Transverse colon (tissue), 4 donors: ENCODE measurements at regions of chr7 and their contacts with region 1.

Region 1: DNA sequence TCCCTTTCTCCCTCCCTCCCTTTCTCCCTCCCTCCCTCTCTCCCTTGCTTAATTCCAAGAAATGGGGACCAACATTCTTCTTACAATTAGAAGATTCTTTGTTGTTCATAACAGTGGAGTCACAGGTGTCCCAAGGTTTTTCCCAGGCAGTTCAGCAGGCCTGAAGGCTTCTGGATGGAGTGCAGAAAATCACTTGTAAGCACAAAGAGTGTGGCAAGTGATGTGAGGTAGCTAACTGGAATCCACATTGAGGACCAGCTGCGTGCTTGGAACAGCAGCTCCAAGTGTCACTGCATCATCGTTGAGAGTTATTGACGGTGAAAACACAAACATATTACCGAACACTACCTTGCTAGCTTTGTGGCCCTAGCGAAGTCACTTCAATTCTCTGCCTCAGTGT is 31.6 kb upstream of the BHLHA15 start:
- DNase-seq: no peak
- H3K4me3 ChIP-seq: no peak overlapping the region
- H3K27ac ChIP-seq: no peak overlapping the region
- H3K4me1 ChIP-seq: no peaks in the 10 kb centered on the region
- H3K27me3 ChIP-seq: no peaks in the 10 kb centered on the region
- CTCF ChIP-seq: no peak
- EP300 ChIP-seq: no peak
- POLR2A ChIP-seq: no peak

Region 2: DNA sequence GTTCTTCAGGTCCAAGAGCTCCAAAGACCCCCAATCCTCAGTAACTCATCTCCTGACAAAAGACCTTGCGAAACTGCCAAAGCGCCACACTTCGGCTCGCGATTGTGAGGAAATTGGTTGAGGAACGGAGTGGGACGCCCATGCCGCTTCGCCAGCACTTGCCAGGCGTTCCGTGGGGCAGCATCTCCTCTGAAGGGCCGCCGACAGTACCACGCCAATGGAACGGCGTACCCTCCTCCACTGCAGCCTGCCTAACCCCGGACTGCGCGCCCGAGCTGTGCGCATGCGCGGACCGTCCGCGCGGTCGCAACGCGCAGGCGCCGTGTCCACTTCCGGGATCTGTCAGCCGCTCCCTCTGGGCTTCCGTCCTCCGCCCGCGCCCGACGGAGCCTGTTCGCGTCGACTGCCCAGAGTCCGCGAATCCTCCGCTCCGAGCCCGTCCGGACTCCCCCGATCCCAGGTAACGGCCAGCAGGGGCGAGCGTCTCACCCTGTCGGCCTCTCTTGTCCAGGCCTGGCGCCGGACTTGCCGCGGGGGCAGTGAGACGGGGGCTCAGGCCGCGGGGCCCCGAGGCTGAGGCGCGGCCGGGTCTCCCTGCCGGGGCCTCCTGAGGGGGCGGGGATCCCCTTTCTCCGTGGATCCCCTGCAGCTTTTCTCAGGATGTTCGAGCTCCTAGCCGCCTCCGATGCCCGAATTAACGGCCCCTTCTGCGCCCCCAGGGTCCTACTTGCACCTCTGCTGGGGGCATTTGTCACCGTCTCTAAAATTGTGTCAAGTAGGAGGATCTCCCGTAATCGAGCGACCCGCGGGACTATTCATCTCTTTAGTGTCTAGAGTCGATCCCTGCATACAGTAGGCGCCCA is 1146.2 kb after region 1 on chr7 and contains the start of gene ARPC1A:
- in situ Hi-C with region 1: no loop called
- intact Hi-C with region 1: loop called (anchors 5 kb)
- DNase-seq: peak; percentile 94
- H3K4me3 ChIP-seq: peak within 1 kb of the TSS; percentile 87 to 98 (median 91)
- H3K27ac ChIP-seq: peak within 1 kb of the TSS; percentile 93 to 96 (median 94)
- H3K4me1 ChIP-seq: peaks cover 24 to 52% (median 45%) of the 10 kb centered on the region in 4 donors
- H3K27me3 ChIP-seq: no peaks in the 10 kb centered on the region
- CTCF ChIP-seq: peak in 4 of 5 experiments; percentile 19 to 66 (median 35)
- EP300 ChIP-seq: no peak
- POLR2A ChIP-seq: peak; percentile 89
- total RNA-seq, gene ARPC1A: 104 to 186 (median 147) TPM